Naive thymus-derived CD4-positive, alpha-beta T cell (primary cell): ENCODE measurements at regions of chr3 and their contacts with region 1.

Region 1: GRCh38 chr3:177050501-177051237 is 146.6 kb downstream of the TBL1XR1 start:
- DNase-seq: peak in 7 of 9 donors; percentile 35 to 67 (median 52)
- ATAC-seq: peak; percentile 87
- H3K4me3 ChIP-seq: no peak overlapping the region
- H3K4me3 Mint-ChIP-seq: no peak overlapping the region
- H3K27ac ChIP-seq: no peak overlapping the region
- H3K27ac Mint-ChIP-seq: peak overlapping the region in 4 of 9 donors; percentile 17 to 56 (median 32)
- H3K4me1 ChIP-seq: peaks cover 0 to 6% of the 10 kb centered on the region in 2 donors
- H3K4me1 Mint-ChIP-seq: peaks cover 0 to 23% (median 18%) of the 10 kb centered on the region in 7 donors
- H3K27me3 ChIP-seq: no peaks in the 10 kb centered on the region
- H3K27me3 Mint-ChIP-seq: no peaks in the 10 kb centered on the region

Region 2: DNA sequence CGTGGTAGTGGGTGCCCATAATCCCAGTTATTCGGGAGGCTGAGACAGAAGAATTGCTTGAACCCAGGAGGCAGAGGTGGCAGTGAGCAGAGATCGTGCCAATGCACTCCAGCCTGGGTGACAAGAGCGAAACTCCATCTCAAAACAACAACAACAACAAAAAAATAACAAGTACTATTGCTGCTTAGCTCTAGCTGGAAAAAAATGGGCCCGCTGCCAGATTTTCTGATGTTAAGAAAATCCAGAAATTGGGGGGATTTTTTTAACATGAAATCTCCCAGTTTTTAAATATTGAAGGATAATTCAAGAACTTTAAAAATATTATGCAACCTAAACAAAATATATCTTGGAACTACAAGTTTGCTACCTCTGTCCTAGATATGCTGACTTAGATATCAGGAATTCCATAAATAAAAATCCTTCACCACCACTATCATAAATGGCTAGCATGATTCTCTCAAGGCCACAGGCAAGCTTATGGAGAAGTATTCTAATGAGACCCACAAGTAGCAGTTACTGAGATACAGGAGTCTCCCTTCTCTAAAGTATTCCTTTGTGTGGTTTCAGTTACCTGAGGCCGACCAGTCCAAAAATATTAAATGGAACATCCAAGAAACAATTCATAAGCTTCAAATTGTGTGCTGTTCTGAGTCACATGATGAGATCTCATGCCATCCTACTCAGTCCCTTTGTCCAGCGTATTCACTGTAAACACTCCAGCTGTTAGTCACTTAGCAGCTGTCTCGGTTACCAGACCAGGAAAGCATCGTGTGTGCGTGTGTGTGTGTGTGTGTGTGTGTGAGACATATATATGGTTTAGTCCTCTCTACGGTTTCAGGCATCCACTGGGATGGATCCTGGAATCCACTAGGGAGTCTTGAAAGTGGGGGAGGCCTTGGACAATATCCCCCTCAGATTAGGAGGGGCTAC is 130.6 kb before region 1 on chr3:
- CTCF ChIA-PET with region 1: no interaction called
- POLR2A ChIA-PET with region 1: no interaction called
- intact Hi-C with region 1: no loop called
- DNase-seq: no peak
- ATAC-seq: no peak
- H3K4me3 ChIP-seq: no peak overlapping the region
- H3K4me3 Mint-ChIP-seq: no peak overlapping the region
- H3K27ac ChIP-seq: no peak overlapping the region
- H3K27ac Mint-ChIP-seq: no peak overlapping the region
- H3K4me1 ChIP-seq: no peaks in the 10 kb centered on the region
- H3K4me1 Mint-ChIP-seq: no peaks in the 10 kb centered on the region
- H3K27me3 ChIP-seq: no peaks in the 10 kb centered on the region
- H3K27me3 Mint-ChIP-seq: peaks cover 0 to 21% (median 4%) of the 10 kb centered on the region in 5 donors

Region 3: GRCh38 chr3:177306252-177306651 is 255.6 kb after region 1 on chr3:
- CTCF ChIA-PET with region 1: no interaction called
- POLR2A ChIA-PET with region 1: no interaction called
- intact Hi-C with region 1: loop called in 1 of 2 experiments (anchors 1 kb)
- DNase-seq: no peak
- ATAC-seq: no peak
- H3K4me3 ChIP-seq: no peak overlapping the region
- H3K4me3 Mint-ChIP-seq: no peak overlapping the region
- H3K27ac ChIP-seq: no peak overlapping the region
- H3K27ac Mint-ChIP-seq: no peak overlapping the region
- H3K4me1 ChIP-seq: no peaks in the 10 kb centered on the region
- H3K4me1 Mint-ChIP-seq: peaks cover 0 to 4% (median 0%) of the 10 kb centered on the region in 7 donors
- H3K27me3 ChIP-seq: no peaks in the 10 kb centered on the region
- H3K27me3 Mint-ChIP-seq: peaks cover 0 to 4% (median 0%) of the 10 kb centered on the region in 5 donors

Region 4: DNA sequence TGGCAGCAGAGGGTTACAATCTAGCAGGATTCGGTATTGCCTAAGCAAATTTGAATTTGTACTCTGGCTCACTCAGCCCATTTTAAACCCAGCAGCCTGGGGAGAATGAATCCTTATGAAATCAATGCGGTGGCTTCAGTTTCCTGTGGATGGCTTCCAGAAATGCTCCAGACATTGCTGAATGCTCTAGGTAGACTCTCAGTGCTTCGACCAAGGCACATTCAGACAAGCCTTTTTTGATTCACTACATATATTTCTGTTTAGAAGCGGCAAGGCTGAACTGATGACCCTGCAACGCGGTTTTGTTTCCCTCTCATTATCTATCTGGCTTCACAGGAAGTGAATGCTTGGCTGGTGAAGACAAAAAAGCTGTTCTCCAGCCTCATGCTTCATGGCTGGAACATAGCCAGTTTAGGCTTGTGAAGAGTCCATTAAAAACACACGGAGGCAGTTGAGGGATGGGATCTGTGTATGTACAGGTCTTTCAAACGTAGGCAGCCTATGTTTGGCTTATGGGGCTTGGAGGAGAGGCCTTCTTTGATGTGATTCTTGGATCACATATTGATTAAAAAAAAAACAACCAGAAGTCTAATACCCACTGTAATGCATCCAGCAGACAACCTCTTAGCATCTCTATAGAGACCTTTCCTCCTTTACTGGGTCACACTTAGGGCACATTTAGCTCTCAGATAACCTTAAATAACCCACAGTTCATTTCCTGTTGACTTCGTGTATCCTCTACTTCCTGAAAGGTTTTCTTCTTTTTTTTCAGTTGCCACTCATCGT is 546.8 kb after region 1 on chr3:
- CTCF ChIA-PET with region 1: no interaction called
- POLR2A ChIA-PET with region 1: no interaction called
- intact Hi-C with region 1: loop called (anchors 5 kb)
- DNase-seq: peak in 7 of 9 donors; percentile 36 to 75 (median 65)
- ATAC-seq: peak; percentile 93
- H3K4me3 ChIP-seq: peak overlapping the region; percentile 21
- H3K4me3 Mint-ChIP-seq: peak overlapping the region; percentile 51 to 80 (median 72)
- H3K27ac ChIP-seq: peak overlapping the region; percentile 54
- H3K27ac Mint-ChIP-seq: peak overlapping the region; percentile 77 to 97 (median 91)
- H3K4me1 ChIP-seq: peaks cover 39 to 50% of the 10 kb centered on the region in 2 donors
- H3K4me1 Mint-ChIP-seq: peaks cover 51 to 87% (median 83%) of the 10 kb centered on the region in 7 donors
- H3K27me3 ChIP-seq: no peaks in the 10 kb centered on the region
- H3K27me3 Mint-ChIP-seq: no peaks in the 10 kb centered on the region

Region 5: GRCh38 chr3:177679568-177680441 is 629.1 kb after region 1 on chr3:
- CTCF ChIA-PET with region 1: no interaction called
- POLR2A ChIA-PET with region 1: no interaction called
- intact Hi-C with region 1: loop called in 1 of 2 experiments (anchors 1 kb)
- DNase-seq: no peak
- ATAC-seq: peak; percentile 67
- H3K4me3 ChIP-seq: no peak overlapping the region
- H3K4me3 Mint-ChIP-seq: no peak overlapping the region
- H3K27ac ChIP-seq: no peak overlapping the region
- H3K27ac Mint-ChIP-seq: peak overlapping the region in 3 of 9 donors; percentile 7 to 28 (median 27)
- H3K4me1 ChIP-seq: peaks cover 0 to 37% of the 10 kb centered on the region in 2 donors
- H3K4me1 Mint-ChIP-seq: peaks cover 0 to 38% (median 16%) of the 10 kb centered on the region in 7 donors
- H3K27me3 ChIP-seq: no peaks in the 10 kb centered on the region
- H3K27me3 Mint-ChIP-seq: no peaks in the 10 kb centered on the region

Region 6: GRCh38 chr3:177994976-177995375 is 944.3 kb after region 1 on chr3:
- CTCF ChIA-PET with region 1: no interaction called
- POLR2A ChIA-PET with region 1: no interaction called
- intact Hi-C with region 1: loop called in 1 of 2 experiments (anchors 10 kb)
- DNase-seq: no peak
- ATAC-seq: no peak
- H3K4me3 ChIP-seq: no peak overlapping the region
- H3K4me3 Mint-ChIP-seq: no peak overlapping the region
- H3K27ac ChIP-seq: no peak overlapping the region
- H3K27ac Mint-ChIP-seq: peak overlapping the region in 3 of 9 donors; percentile 16 to 52 (median 40)
- H3K4me1 ChIP-seq: peaks cover 6 to 8% of the 10 kb centered on the region in 2 donors
- H3K4me1 Mint-ChIP-seq: peaks cover 5 to 28% (median 23%) of the 10 kb centered on the region in 7 donors
- H3K27me3 ChIP-seq: no peaks in the 10 kb centered on the region
- H3K27me3 Mint-ChIP-seq: no peaks in the 10 kb centered on the region

Region 7: DNA sequence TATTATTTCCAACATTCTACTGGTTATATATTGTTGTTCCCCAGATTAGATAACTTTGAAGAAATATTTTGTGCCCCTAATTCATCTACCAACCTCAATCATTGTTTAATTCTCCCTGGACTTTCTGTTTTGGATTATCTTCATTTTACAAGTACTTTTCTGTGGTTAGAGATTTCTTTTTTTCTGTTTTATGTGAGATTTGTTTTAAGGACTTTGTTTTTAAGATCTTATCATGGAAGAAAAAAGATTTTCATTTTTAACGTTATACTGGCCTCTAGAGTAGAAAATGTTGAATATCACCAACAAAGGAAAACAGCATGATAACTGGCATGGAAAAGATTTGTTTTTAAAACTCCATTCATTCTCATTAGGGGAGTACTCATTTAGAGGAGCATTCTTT is 1274.7 kb after region 1 on chr3:
- CTCF ChIA-PET with region 1: interaction called, 4 read pairs
- POLR2A ChIA-PET with region 1: no interaction called
- intact Hi-C with region 1: loop called (anchors 1 to 10 kb)
- DNase-seq: peak in 4 of 9 donors; percentile 5 to 33 (median 22)
- ATAC-seq: no peak
- H3K4me3 ChIP-seq: no peak overlapping the region
- H3K4me3 Mint-ChIP-seq: no peak overlapping the region
- H3K27ac ChIP-seq: no peak overlapping the region
- H3K27ac Mint-ChIP-seq: no peak overlapping the region
- H3K4me1 ChIP-seq: no peaks in the 10 kb centered on the region
- H3K4me1 Mint-ChIP-seq: no peaks in the 10 kb centered on the region
- H3K27me3 ChIP-seq: no peaks in the 10 kb centered on the region
- H3K27me3 Mint-ChIP-seq: no peaks in the 10 kb centered on the region